ENCODE measurements at regions of chr18 and their contacts with region 1.

Region 1: GRCh38 chr18:57630002-57630753 is 8.5 kb upstream of the NARS1 start:
- DNase-seq: peak; percentile 82 to 88
- H3K4me3 ChIP-seq: peak overlapping the region; percentile 60
- H3K27ac ChIP-seq: peak overlapping the region; percentile 57
- H3K4me1 ChIP-seq: peaks cover 10% of the 10 kb centered on the region
- H3K27me3 ChIP-seq: no peaks in the 10 kb centered on the region
- CTCF ChIP-seq: peak; percentile 70; the same call in 1 of the 2 replicates

Region 2: GRCh38 chr18:57649556-57650500 is 19.6 kb after region 1 on chr18:
- CTCF ChIA-PET with region 1: no interaction called
- POLR2A ChIA-PET with region 1: no interaction called
- intact Hi-C with region 1: no loop called
- DNase-seq: peak in 1 of 2 experiments; percentile 70
- H3K4me3 ChIP-seq: no peak overlapping the region
- H3K27ac ChIP-seq: peak overlapping the region; percentile 55
- H3K4me1 ChIP-seq: peaks cover 8% of the 10 kb centered on the region
- H3K27me3 ChIP-seq: no peaks in the 10 kb centered on the region
- CTCF ChIP-seq: no peak

Region 3: DNA sequence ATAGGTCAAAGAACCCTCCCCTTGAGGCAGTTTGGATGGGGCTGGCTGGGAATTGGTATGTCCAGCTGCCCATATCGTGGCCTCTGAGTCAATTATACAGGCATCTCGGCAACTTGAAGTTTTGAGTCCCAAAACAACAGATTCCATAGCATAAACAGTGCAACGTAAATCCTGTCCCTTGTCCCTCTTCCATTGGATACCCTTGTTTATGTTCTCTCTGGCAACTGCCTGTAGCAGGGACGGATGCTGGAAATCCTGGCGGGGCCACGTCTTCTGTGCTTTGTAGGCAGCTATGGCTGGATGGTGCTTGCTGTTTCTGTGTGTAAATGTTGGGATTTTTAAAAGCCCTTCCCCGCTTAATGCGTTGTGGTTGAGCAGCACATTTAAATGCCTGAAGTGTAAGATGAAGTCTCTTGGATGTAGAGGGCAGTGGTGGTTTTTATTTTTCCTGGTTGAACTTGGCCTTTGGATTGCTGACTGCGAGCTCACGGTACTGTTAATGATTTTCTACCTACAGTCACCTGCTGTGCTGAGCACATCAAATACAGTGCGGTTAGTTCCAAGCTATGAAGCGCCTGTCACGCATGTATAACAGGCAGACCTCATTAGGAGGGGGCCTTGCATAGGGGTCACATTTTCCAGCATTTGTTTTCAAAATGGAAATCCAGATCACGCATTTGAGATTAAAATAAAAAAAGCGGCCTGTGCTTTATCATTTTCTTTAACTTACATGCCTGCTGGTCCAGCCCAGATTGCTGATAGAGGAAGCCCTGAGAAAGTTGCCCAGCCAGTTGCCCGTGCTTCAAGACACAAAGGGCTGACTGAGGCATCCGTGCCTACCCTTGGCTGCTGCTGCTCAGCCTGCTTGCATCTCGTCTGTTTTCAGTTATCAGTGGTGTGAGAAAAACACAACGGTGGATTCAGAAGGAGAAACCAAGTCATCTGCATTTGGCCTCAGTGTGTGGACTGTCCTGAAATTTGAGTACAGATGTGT is 498.5 kb after region 1 on chr18:
- CTCF ChIA-PET with region 1: no interaction called
- POLR2A ChIA-PET with region 1: no interaction called
- intact Hi-C with region 1: loop called (anchors 10 kb)
- DNase-seq: peak in 1 of 2 experiments; percentile 80
- H3K4me3 ChIP-seq: peak overlapping the region; percentile 30; the same call in 1 of the 2 replicates
- H3K27ac ChIP-seq: peak overlapping the region; percentile 65
- H3K4me1 ChIP-seq: peaks cover 18% of the 10 kb centered on the region
- H3K27me3 ChIP-seq: no peaks in the 10 kb centered on the region
- CTCF ChIP-seq: no peak; the same call in 1 of the 2 replicates